ENCODE measurements at regions of chr2 and their contacts with region 1.

Region 1: GRCh38 chr2:96801005-96801785 is 14.9 kb upstream of the CNNM3 start:
- DNase-seq: peak; percentile 67
- ATAC-seq: peak; percentile 98
- H3K4me3 Mint-ChIP-seq: no peak overlapping the region
- H3K27ac Mint-ChIP-seq: no peak overlapping the region
- H3K4me1 Mint-ChIP-seq: peaks cover 5% of the 10 kb centered on the region
- H3K27me3 Mint-ChIP-seq: no peaks in the 10 kb centered on the region
- CTCF ChIP-seq: no peak

Region 2: GRCh38 chr2:95333888-95334338 is 1467.3 kb before region 1 on chr2:
- CTCF ChIA-PET with region 1: no interaction called
- POLR2A ChIA-PET with region 1: no interaction called
- intact Hi-C with region 1: no loop called
- DNase-seq: no peak
- ATAC-seq: no peak
- H3K4me3 Mint-ChIP-seq: no peak overlapping the region
- H3K27ac Mint-ChIP-seq: no peak overlapping the region
- H3K4me1 Mint-ChIP-seq: no peaks in the 10 kb centered on the region
- H3K27me3 Mint-ChIP-seq: no peaks in the 10 kb centered on the region
- CTCF ChIP-seq: no peak

Region 3: GRCh38 chr2:96407041-96407918 is 393.9 kb before region 1 on chr2:
- CTCF ChIA-PET with region 1: no interaction called
- POLR2A ChIA-PET with region 1: no interaction called
- intact Hi-C with region 1: loop called (anchors 5 kb)
- DNase-seq: peak; percentile 48
- ATAC-seq: peak; percentile 85
- H3K4me3 Mint-ChIP-seq: no peak overlapping the region
- H3K27ac Mint-ChIP-seq: no peak overlapping the region
- H3K4me1 Mint-ChIP-seq: peaks cover 7% of the 10 kb centered on the region
- H3K27me3 Mint-ChIP-seq: no peaks in the 10 kb centered on the region
- CTCF ChIP-seq: no peak

Region 4: GRCh38 chr2:96602330-96602823 is 198.8 kb before region 1 on chr2:
- CTCF ChIA-PET with region 1: interaction called, 4 read pairs
- POLR2A ChIA-PET with region 1: no interaction called
- intact Hi-C with region 1: loop called (anchors 1 kb)
- DNase-seq: no peak
- ATAC-seq: no peak
- H3K4me3 Mint-ChIP-seq: no peak overlapping the region
- H3K27ac Mint-ChIP-seq: no peak overlapping the region
- H3K4me1 Mint-ChIP-seq: no peaks in the 10 kb centered on the region
- H3K27me3 Mint-ChIP-seq: no peaks in the 10 kb centered on the region
- CTCF ChIP-seq: no peak

Region 5: DNA sequence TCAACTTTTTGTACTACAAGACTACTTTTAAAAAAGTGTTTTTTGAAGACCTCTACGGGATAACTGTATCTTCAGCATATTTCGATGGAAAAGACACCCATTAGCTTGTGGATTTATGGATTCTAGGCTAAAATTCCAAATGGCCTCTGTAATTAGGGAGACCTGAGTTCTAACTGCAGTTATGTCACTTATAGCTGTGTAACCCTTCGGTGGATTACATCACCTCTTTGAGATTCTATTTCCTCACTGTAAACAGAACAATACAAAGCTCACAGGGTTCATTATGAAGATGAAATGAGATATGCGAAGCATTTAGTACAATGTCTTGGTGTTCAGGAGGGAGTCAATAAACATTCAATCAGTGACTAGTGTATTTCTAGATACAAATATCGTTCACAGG is 85.5 kb before region 1 on chr2:
- CTCF ChIA-PET with region 1: no interaction called
- POLR2A ChIA-PET with region 1: no interaction called
- intact Hi-C with region 1: loop called (anchors 5 kb)
- DNase-seq: no peak
- ATAC-seq: no peak
- H3K4me3 Mint-ChIP-seq: no peak overlapping the region
- H3K27ac Mint-ChIP-seq: no peak overlapping the region
- H3K4me1 Mint-ChIP-seq: no peaks in the 10 kb centered on the region
- H3K27me3 Mint-ChIP-seq: no peaks in the 10 kb centered on the region
- CTCF ChIP-seq: no peak

Region 6: DNA sequence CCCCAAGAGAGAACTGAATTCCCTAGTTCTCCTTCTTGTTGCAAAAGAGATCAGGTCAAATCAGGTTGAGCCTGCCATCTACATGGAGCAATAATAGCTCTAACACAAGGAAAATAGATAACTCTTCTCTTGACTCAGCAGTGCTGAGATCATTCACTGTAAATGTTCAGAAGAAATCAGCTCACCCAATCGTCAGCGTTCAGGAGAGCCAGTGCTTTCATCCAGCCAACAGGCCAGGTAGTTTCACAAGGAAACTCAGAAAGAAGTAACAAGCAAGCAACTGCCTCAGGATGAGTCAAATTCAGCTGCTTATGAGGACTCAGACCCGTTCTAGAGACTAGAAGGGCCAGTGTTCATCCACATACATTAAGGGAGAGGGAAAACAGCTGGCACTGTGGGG is 67.3 kb before region 1 on chr2:
- CTCF ChIA-PET with region 1: no interaction called
- POLR2A ChIA-PET with region 1: no interaction called
- intact Hi-C with region 1: no loop called
- DNase-seq: no peak
- ATAC-seq: no peak
- H3K4me3 Mint-ChIP-seq: no peak overlapping the region
- H3K27ac Mint-ChIP-seq: no peak overlapping the region
- H3K4me1 Mint-ChIP-seq: peaks cover 11% of the 10 kb centered on the region
- H3K27me3 Mint-ChIP-seq: no peaks in the 10 kb centered on the region
- CTCF ChIP-seq: no peak

Region 7: DNA sequence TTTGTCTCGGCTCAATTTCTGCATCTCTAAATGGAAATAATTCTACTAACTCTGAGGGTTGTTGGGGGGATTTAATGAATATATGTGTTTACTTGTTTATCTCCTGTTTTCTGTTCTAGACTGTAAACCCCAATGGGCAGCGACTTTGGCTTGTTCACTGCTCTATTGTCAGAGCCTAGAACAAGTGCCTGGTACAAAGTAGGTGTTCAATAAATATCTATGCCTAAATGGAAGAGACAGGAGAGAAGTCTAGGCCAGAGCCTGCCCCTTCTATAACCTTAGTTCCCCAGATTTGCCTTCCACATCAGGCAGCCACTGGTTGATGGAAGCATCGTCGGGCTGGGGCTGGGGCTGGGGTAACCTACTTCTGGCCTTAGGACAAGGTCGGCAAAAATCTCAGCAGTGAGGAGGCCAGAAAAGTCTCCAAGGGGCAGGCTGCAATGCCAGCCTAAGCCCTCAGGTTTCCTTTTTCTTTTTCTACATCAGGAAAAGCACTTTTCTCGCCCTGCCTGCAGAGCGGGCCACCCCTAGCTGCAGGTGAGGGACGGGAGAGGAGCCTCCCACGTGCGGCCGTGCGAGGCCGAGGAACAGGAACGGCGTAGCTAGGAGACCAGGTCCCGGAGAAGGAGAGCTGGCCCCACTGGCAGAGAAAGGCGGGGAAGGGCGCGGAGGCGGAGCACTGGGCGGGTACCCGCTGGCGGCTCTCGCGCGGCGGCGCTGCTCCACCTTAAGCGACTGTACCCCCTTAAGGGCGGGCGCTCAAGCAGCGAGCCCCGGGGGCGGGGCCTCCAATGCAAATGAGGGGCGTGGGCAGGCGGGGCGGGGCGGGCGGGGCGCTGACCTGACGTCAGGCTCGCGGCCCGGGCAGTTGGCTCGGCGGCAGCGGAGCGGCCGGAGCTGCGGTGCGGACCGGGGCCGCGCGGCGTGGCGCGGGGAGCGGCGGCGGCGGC is 40.9 kb before region 1 on chr2 and contains the start of gene CNNM4:
- CTCF ChIA-PET with region 1: interaction called, 7 read pairs
- POLR2A ChIA-PET with region 1: interaction called, 3 read pairs
- intact Hi-C with region 1: loop called (anchors 1 kb)
- DNase-seq: peak; percentile 89
- ATAC-seq: peak; percentile 91
- H3K4me3 Mint-ChIP-seq: peak within 1 kb of the TSS; percentile 90
- H3K27ac Mint-ChIP-seq: peak within 1 kb of the TSS; percentile 89
- H3K4me1 Mint-ChIP-seq: peaks cover 49% of the 10 kb centered on the region
- H3K27me3 Mint-ChIP-seq: no peaks in the 10 kb centered on the region
- CTCF ChIP-seq: no peak
- total RNA-seq, gene CNNM4: 7.4 and 10.0 TPM in 2 replicates

Measured in activated B cell treated with CpG ODN at 0.5 μM for 24 hours (primary cell).